ENCODE measurements at regions of chr2 and their contacts with region 1.

Region 1: GRCh38 chr2:25021791-25022362 is 20.0 kb upstream of the EFR3B start:
- DNase-seq: no peak
- H3K4me3 ChIP-seq: no peak overlapping the region
- H3K27ac ChIP-seq: no peak overlapping the region
- H3K4me1 ChIP-seq: no peaks in the 10 kb centered on the region
- H3K27me3 ChIP-seq: no peaks in the 10 kb centered on the region
- CTCF ChIP-seq: no peak
- EP300 ChIP-seq: no peak
- POLR2A ChIP-seq: no peak

Region 2: DNA sequence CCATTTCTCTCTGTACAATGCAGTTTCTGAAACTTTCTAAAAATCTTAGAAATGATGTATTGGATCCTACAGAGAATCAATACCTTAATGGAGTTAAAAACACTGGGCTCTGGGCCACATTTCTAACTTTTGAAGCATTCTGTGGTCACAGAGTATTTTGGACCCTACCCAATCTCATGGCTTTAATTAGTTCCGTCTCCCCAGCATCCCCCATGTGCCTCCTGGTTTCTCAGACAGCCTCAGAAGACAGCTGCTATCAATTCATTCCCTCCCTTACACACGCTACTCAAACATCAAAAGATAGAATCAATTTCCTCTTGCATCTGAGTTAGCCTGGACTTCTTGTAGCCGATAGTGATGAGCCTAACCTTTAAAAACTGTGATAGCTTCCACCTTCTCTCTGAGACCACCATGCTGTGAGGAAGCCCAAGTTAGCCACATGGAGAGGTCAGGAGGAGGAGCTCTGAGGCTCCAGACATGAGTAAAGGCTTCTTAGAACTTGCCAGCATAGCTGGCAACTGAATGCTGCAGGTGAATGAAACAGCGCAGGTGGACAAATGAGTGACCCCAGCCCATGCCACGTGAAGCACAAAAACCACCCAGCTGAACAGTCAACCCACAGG is 112.2 kb before region 1 on chr2:
- intact Hi-C with region 1: loop called in 1 of 4 experiments (anchors 5 kb)
- DNase-seq: peak in 1 of 5 donors; percentile 8
- H3K4me3 ChIP-seq: no peak overlapping the region
- H3K27ac ChIP-seq: no peak overlapping the region
- H3K4me1 ChIP-seq: peaks cover 4% of the 10 kb centered on the region
- H3K27me3 ChIP-seq: no peaks in the 10 kb centered on the region
- CTCF ChIP-seq: no peak
- EP300 ChIP-seq: no peak
- POLR2A ChIP-seq: no peak